Heart right ventricle (tissue), 16 donors: ENCODE measurements at regions of chr20 and their contacts with region 1.

Region 1: DNA sequence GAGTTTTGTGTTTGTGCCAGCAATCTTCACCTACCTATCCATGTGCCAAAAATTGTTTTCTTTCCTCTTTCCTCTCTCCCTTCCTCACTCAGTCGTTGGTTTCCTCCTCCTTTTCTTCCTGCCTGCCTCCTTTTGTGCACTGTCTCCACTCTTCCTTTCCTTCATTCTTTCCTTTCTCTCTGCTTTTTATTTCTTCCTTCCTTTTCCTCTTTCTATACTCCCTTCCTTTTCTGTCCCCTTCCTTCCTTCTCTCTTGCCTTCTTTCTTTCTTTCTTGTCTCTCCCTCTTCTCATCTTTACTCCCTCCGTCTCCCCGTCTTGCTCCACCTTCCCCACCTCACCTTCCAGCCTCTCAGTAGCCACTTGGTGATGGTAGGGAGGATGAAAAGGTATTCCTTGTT is 401.0 kb downstream of the CBLN4 start:
- DNase-seq: no peak
- ATAC-seq: no peak
- H3K4me3 ChIP-seq: no peak overlapping the region
- H3K27ac ChIP-seq: no peak overlapping the region
- H3K4me1 ChIP-seq: no peaks in the 10 kb centered on the region
- H3K27me3 ChIP-seq: no peaks in the 10 kb centered on the region
- CTCF ChIP-seq: no peak

Region 2: DNA sequence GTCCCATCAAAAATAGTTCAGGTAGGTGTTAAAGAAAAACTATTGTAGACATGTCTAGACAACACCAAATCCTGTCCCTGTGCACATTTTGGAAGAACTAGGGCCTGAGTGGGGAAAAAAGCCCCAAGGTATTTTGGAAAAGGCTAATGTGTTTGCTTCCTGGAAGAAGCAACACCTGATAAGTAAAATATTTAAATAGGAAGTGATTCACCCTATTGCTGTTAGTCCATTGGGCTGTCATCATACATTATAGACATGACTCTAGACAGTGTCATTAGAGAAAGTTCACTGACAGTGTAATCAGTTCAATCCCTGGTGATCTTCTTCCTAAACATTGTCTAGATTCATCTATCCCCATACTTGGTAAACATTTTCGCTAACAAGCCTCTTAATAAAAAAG is 64.4 kb before region 1 on chr20:
- intact Hi-C with region 1: loop called in 1 of 10 experiments (anchors 10 kb)
- DNase-seq: no peak
- ATAC-seq: no peak
- H3K4me3 ChIP-seq: no peak overlapping the region
- H3K27ac ChIP-seq: no peak overlapping the region
- H3K4me1 ChIP-seq: no peaks in the 10 kb centered on the region
- H3K27me3 ChIP-seq: no peaks in the 10 kb centered on the region
- CTCF ChIP-seq: no peak